ENCODE measurements at regions of chr2 and their contacts with region 1.

Region 1: GRCh38 chr2:42513257-42513918 is 19.6 kb upstream of the KCNG3 start:
- DNase-seq: peak; percentile 34
- H3K4me3 ChIP-seq: no peak overlapping the region
- H3K27ac ChIP-seq: peak overlapping the region in 1 of 4 donors; percentile 35
- H3K4me1 ChIP-seq: peaks cover 0 to 5% (median 4%) of the 10 kb centered on the region in 4 donors
- H3K27me3 ChIP-seq: no peaks in the 10 kb centered on the region
- CTCF ChIP-seq: peak; percentile 67 to 78 (median 70)
- EP300 ChIP-seq: no peak
- POLR2A ChIP-seq: no peak

Region 2: DNA sequence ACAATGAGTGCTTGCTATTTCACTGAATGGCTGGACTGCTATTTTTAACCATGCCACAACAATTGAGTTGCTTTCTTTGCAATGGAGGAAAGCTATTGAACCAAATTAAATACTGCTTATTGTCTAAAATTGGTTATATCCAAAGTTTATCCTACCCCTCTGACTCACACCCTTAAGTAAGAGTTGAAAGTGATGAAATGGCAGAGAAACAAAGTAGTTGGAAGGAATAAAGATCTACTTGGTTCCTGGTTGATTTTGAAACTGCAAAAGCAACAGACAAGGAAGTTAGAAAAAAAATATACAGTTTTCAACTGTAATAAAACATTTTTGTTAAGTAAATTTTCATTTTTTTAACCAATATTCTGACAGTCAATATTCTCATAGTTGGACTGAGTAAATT is 296.7 kb before region 1 on chr2:
- in situ Hi-C with region 1: no loop called
- intact Hi-C with region 1: no loop called
- DNase-seq: no peak
- H3K4me3 ChIP-seq: no peak overlapping the region
- H3K27ac ChIP-seq: peak overlapping the region in 1 of 4 donors; percentile 1
- H3K4me1 ChIP-seq: peaks cover 0 to 16% (median 7%) of the 10 kb centered on the region in 4 donors
- H3K27me3 ChIP-seq: no peaks in the 10 kb centered on the region
- CTCF ChIP-seq: no peak
- EP300 ChIP-seq: no peak
- POLR2A ChIP-seq: no peak

Region 3: GRCh38 chr2:42569883-42570282 is 56.5 kb after region 1 on chr2:
- in situ Hi-C with region 1: no loop called
- intact Hi-C with region 1: loop called (anchors 2 kb)
- DNase-seq: no peak
- H3K4me3 ChIP-seq: peak overlapping the region in 3 of 4 donors; percentile 81 to 96 (median 91)
- H3K27ac ChIP-seq: peak overlapping the region; percentile 92 to 96 (median 94)
- H3K4me1 ChIP-seq: peaks cover 0 to 36% (median 27%) of the 10 kb centered on the region in 4 donors
- H3K27me3 ChIP-seq: no peaks in the 10 kb centered on the region
- CTCF ChIP-seq: no peak
- EP300 ChIP-seq: no peak
- POLR2A ChIP-seq: no peak

Measured in transverse colon (tissue), 4 donors.